ENCODE measurements at regions of chr12 and their contacts with region 1.

Region 1: DNA sequence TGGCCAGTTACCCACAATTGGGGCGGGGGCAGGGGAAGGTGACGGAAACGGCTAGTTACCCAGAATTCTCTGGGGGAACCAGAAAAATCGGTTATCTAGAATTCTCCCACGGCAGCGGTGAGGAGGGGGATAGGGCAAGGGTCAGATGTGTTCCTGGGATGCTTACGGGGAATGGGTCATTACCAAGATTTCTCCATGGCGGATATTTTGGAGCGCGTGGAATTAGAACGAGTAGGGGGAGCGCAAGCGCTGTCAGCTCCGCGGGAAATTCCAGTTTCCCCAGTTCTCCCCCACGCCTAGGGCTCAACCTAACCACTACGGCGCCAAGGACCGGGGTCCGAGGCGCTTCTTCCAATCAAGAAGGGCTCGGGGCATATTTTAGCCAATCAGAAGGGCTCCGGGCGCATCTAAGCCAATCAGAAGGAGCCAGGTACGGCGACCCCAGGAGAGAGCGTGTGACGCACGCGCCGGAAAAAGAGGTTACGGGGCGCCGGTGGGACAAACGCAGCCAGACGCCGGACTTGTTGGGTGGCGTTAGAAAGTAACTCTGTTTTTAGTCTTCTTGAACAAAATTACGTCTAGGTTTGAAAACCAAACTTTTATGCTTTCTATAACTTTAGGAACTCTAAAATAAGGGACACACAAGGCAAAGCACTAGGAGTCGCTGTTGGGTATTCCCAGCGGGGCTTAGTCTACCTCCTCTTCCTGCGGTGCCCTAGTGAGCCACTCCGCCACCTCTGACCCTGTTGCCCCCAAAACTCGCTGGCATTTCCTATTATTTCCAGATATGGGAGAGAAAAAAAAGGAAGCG is at the start of gene PAN2:
- DNase-seq: peak; percentile 96 to 98 (median 97)
- ATAC-seq: peak; percentile 98 to 100 (median 99)
- H3K4me3 ChIP-seq: peak within 1 kb of the TSS; percentile 32 to 93 (median 68)
- H3K27ac ChIP-seq: peak within 1 kb of the TSS; percentile 88 to 100 (median 95)
- H3K4me1 ChIP-seq: peaks cover 0 to 39% (median 13%) of the 10 kb centered on the region in 12 donors
- H3K27me3 ChIP-seq: no peaks in the 10 kb centered on the region
- CTCF ChIP-seq: peak in 11 of 12 donors; percentile 24 to 66 (median 50)
- POLR2A ChIP-seq: peak; percentile 40 to 80
- total RNA-seq, gene PAN2: 12.3 to 43.8 (median 38.2) TPM

Region 2: GRCh38 chr12:56271031-56271430 is 62.9 kb before region 1 on chr12:
- intact Hi-C with region 1: no loop called
- DNase-seq: peak in 2 of 5 donors; percentile 18 to 29
- ATAC-seq: peak; percentile 61 to 81 (median 70)
- H3K4me3 ChIP-seq: no peak overlapping the region
- H3K27ac ChIP-seq: peak overlapping the region; percentile 66 to 99 (median 82)
- H3K4me1 ChIP-seq: peaks cover 0 to 50% (median 15%) of the 10 kb centered on the region in 12 donors
- H3K27me3 ChIP-seq: no peaks in the 10 kb centered on the region
- CTCF ChIP-seq: peak in 7 of 12 donors; percentile 11 to 50 (median 38)
- POLR2A ChIP-seq: peak in 1 of 2 donors; percentile 39

Region 3: DNA sequence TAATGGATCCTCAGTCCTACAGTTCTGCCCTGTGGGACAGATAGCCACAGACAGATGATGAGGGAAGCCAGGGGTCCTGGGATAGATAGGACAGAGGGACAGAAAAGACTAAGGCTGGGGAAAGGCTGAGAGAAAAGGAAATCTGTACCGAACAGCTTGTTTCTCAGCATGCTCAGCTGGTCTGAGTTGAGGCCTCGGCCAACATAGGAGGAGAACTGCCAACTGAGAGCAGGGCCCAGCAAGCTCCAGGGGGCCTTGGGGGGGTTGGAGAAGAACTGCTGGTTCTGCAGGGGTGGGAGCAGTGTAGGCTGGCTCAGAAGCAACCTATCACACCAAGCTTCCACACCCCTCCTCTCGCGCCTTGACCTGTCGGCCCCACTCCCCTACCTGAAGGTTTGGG is 14.9 kb after region 1 on chr12:
- intact Hi-C with region 1: no loop called
- DNase-seq: no peak
- ATAC-seq: no peak
- H3K4me3 ChIP-seq: no peak overlapping the region
- H3K27ac ChIP-seq: no peak overlapping the region
- H3K4me1 ChIP-seq: no peaks in the 10 kb centered on the region
- H3K27me3 ChIP-seq: no peaks in the 10 kb centered on the region
- CTCF ChIP-seq: no peak
- POLR2A ChIP-seq: no peak

Region 4: DNA sequence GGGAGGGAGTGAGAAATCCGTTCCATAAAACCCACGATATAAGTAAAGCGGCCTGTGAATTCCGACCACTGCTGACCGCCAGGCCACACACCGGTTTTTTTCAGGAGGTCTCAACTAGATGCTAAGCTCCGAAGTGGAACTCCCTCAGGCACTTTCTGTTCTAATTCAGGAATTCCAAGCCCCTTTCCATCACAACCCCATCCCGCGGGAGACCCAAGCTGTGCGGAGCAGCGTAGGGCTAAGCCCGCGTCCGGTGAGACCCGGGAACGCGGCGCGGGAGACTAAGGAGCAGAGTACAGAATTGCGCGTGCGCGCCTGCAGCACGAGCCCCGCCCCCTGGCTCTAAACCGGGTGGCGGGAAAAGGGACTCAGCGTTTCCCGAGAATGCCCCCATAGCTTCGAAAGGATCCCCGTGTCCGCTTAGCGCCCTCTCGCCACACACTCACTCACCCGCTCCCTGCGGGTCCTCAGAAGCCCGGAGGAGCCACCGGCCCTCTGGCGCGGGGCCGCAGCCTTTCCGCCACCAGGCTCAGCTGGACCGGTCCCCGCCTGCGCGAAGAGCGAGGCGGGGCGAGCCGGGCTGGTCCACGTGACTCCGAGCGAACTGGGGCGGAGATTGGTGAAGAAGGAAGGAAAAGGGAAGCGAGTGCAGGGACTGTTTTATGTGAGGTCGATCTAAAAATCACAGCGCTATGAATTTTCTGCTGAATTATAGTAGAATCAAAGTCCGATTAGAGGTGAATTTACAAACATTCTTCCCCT is 115.2 kb after region 1 on chr12 and contains the start of gene TIMELESS:
- intact Hi-C with region 1: loop called in 1 of 10 experiments (anchors 5 kb)
- DNase-seq: peak; percentile 89 to 92 (median 90)
- ATAC-seq: peak; percentile 96 to 99 (median 98)
- H3K4me3 ChIP-seq: peak within 1 kb of the TSS; percentile 46 to 86 (median 69)
- H3K27ac ChIP-seq: peak within 1 kb of the TSS; percentile 69 to 94 (median 86)
- H3K4me1 ChIP-seq: peaks cover 0 to 22% (median 10%) of the 10 kb centered on the region in 12 donors
- H3K27me3 ChIP-seq: no peaks in the 10 kb centered on the region
- CTCF ChIP-seq: peak in 4 of 12 donors; percentile 6 to 16 (median 14)
- POLR2A ChIP-seq: peak in 1 of 2 donors; percentile 50
- total RNA-seq, gene TIMELESS: 1.1 to 7.3 (median 2.4) TPM

Measured in heart left ventricle (tissue), 16 donors.